ENCODE measurements at regions of chr2 and their contacts with region 1.

Region 1: DNA sequence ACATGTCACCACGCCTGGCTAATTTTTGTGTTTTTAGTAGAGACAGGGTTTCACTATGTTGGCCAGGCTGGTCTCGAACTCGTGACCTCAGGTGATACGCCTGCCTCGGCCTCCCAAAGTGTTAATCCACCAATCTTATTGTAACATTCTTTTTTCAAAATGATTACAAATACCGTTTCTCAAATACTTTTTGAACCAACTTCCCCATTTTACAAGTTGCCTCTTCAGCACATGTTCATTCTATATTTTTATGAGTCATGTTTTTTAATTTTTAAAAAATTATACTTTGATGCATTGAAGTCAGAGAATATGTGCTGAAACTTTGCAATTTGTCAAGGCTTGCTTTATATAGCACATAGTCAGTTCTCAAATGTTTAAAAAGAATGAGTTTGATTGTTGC is 58.2 kb downstream of the QPCT start:
- DNase-seq: no peak
- H3K4me3 ChIP-seq: no peak overlapping the region
- H3K4me3 Mint-ChIP-seq: no peak overlapping the region
- H3K27ac ChIP-seq: no peak overlapping the region
- H3K27ac Mint-ChIP-seq: no peak overlapping the region
- H3K4me1 ChIP-seq: no peaks in the 10 kb centered on the region
- H3K4me1 Mint-ChIP-seq: no peaks in the 10 kb centered on the region
- H3K27me3 ChIP-seq: no peaks in the 10 kb centered on the region
- H3K27me3 Mint-ChIP-seq: peaks cover 0 to 12% of the 10 kb centered on the region in 2 donors

Region 2: DNA sequence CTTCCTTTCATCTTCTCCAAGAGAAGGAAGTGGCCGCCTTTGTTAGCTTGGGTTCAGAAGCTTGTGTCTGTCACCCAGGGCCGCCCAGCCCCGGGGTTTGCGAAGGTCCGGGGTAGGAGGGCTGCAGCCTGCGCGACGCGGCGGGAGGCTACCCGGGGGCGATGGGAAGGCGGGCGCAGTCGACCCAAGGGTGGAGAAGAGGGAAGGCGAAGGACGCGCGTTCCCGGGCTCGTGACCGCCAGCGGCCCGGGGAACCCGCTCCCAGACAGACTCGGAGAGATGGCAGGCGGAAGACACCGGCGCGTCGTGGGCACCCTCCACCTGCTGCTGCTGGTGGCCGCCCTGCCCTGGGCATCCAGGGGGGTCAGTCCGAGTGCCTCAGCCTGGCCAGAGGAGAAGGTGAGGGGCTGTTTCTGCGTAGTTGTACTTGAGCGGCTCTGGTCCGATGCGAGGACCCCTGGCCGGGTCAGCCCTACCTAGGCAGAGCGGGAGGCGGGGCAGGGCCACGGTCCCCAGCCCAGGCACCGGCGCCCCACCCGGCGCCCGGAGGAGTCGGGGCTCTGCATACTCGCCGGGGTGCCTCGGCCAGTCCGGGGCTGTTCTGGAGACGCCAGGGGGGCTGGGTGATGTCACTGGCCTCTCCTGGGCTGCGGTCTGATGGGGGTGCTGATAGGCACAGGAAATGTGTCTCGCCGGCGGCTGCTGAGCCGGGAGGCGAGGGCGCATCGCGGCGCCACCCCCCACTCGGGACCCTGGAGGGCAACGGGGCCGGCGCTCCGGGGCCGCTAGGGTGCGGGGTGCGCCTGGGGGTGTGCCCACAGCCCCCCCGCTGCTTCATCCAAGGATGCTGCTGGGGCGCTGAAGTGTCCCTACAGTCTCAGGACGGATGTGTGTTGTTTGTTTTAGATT is 57.9 kb before region 1 on chr2 and contains the start of gene QPCT:
- CTCF ChIA-PET with region 1: no interaction called
- POLR2A ChIA-PET with region 1: no interaction called
- DNase-seq: peak; percentile 51 to 87 (median 64)
- H3K4me3 ChIP-seq: peak within 1 kb of the TSS; percentile 51
- H3K4me3 Mint-ChIP-seq: peak within 1 kb of the TSS; percentile 79 to 91 (median 84)
- H3K27ac ChIP-seq: peak within 1 kb of the TSS; percentile 2
- H3K27ac Mint-ChIP-seq: peak within 1 kb of the TSS in 7 of 8 donors; percentile 61 to 96 (median 79)
- H3K4me1 ChIP-seq: peaks cover 10% of the 10 kb centered on the region
- H3K4me1 Mint-ChIP-seq: peaks cover 7 to 25% (median 9%) of the 10 kb centered on the region in 3 donors
- H3K27me3 ChIP-seq: peaks cover 4% of the 10 kb centered on the region
- H3K27me3 Mint-ChIP-seq: peaks cover 8 to 9% of the 10 kb centered on the region in 2 donors
- total RNA-seq, gene QPCT: 3.9 to 4.2 TPM

Region 3: GRCh38 chr2:37365669-37366068 is 37.0 kb before region 1 on chr2:
- CTCF ChIA-PET with region 1: no interaction called
- POLR2A ChIA-PET with region 1: no interaction called
- DNase-seq: no peak
- H3K4me3 ChIP-seq: no peak overlapping the region
- H3K4me3 Mint-ChIP-seq: no peak overlapping the region
- H3K27ac ChIP-seq: no peak overlapping the region
- H3K27ac Mint-ChIP-seq: no peak overlapping the region
- H3K4me1 ChIP-seq: peaks cover 30% of the 10 kb centered on the region
- H3K4me1 Mint-ChIP-seq: peaks cover 0 to 18% (median 11%) of the 10 kb centered on the region in 3 donors
- H3K27me3 ChIP-seq: no peaks in the 10 kb centered on the region
- H3K27me3 Mint-ChIP-seq: peaks cover 4 to 6% of the 10 kb centered on the region in 2 donors

Region 4: DNA sequence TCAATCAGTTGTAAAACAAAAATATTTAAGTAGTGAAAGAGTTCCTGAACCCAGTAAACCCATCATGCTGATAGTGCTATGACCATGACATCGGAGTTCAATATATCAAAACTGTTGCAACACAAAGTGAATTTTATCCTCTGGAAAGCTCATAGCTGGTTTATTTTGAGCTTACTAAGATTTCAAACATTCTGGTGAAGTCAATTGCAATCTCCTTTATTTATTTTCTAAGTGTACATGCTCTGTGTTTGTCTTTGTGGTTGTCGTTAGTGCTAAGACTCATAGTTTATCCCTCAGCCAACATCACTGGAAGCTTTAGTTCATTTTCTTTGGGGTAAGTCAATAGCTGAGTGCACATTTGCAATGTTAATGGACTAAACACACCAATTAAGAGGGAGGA is 33.7 kb after region 1 on chr2:
- CTCF ChIA-PET with region 1: no interaction called
- POLR2A ChIA-PET with region 1: no interaction called
- DNase-seq: no peak
- H3K4me3 ChIP-seq: no peak overlapping the region
- H3K4me3 Mint-ChIP-seq: no peak overlapping the region
- H3K27ac ChIP-seq: no peak overlapping the region
- H3K27ac Mint-ChIP-seq: no peak overlapping the region
- H3K4me1 ChIP-seq: no peaks in the 10 kb centered on the region
- H3K4me1 Mint-ChIP-seq: no peaks in the 10 kb centered on the region
- H3K27me3 ChIP-seq: no peaks in the 10 kb centered on the region
- H3K27me3 Mint-ChIP-seq: peaks cover 2 to 31% of the 10 kb centered on the region in 2 donors

Region 5: DNA sequence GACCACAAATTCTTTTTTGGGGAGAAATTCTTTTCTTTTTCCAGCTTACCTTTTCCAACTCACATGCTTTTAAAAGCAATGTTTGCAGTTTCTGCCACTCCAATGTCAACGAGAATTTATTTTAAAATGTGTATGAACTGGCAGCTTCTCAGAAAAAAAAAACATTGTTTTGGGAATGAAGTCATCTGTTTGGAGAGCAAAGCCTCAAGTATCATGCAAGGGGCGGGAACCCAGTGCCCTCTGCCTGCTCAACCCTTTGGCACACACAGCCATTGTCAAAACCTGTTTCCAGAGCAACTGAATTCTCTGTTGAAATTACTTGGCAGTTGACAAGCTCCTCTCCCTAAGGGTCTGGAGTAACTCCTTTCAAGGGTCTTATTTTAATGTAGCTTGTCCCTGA is 70.3 kb after region 1 on chr2:
- CTCF ChIA-PET with region 1: no interaction called
- POLR2A ChIA-PET with region 1: no interaction called
- DNase-seq: no peak
- H3K4me3 ChIP-seq: no peak overlapping the region
- H3K4me3 Mint-ChIP-seq: no peak overlapping the region
- H3K27ac ChIP-seq: no peak overlapping the region
- H3K27ac Mint-ChIP-seq: no peak overlapping the region
- H3K4me1 ChIP-seq: no peaks in the 10 kb centered on the region
- H3K4me1 Mint-ChIP-seq: no peaks in the 10 kb centered on the region
- H3K27me3 ChIP-seq: no peaks in the 10 kb centered on the region
- H3K27me3 Mint-ChIP-seq: no peaks in the 10 kb centered on the region

Region 6: DNA sequence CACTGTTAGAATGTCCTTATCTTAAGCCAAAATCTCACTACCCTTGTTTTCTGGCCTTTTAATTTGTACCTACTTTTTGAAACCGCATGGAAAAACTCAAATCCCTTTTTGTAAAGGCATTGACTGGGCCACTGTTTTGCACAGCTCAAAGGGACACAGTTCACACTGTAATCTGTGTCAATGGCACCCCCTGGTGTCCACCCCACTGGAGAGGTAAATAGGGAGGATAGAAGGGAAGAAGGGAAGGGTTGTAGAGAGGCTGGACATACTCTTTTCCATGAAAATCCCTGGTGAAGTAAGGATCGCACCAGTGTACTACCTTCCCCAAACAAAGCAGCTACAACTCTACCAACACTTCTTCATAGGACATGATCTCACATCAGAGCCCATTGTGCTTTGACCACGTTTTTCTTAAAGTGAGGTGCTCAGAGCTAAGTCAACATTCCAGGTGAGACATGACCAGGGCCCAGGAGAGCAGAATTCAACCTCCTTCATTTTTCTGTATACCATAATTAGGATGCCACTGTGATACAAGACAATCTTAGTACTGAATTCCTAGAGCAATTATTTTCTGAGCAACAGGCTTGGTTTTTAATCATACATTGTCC is 430.1 kb after region 1 on chr2:
- CTCF ChIA-PET with region 1: interaction called, 69 read pairs
- POLR2A ChIA-PET with region 1: no interaction called
- DNase-seq: peak; percentile 57 to 88 (median 76)
- H3K4me3 ChIP-seq: no peak overlapping the region
- H3K4me3 Mint-ChIP-seq: no peak overlapping the region
- H3K27ac ChIP-seq: no peak overlapping the region
- H3K27ac Mint-ChIP-seq: no peak overlapping the region
- H3K4me1 ChIP-seq: no peaks in the 10 kb centered on the region
- H3K4me1 Mint-ChIP-seq: peaks cover 5 to 14% (median 9%) of the 10 kb centered on the region in 3 donors
- H3K27me3 ChIP-seq: no peaks in the 10 kb centered on the region
- H3K27me3 Mint-ChIP-seq: peaks cover 0 to 3% of the 10 kb centered on the region in 2 donors